ENCODE measurements at regions of chr14 and their contacts with region 1.

Region 1: GRCh38 chr14:103104654-103105452 is 10.3 kb downstream of the EXOC3L4 start:
- DNase-seq: peak; percentile 80
- ATAC-seq: peak; percentile 89
- H3K4me3 ChIP-seq: peak overlapping the region; percentile 16
- H3K27ac ChIP-seq: no peak overlapping the region
- H3K4me1 ChIP-seq: peaks cover 31% of the 10 kb centered on the region
- H3K27me3 ChIP-seq: peaks cover 48% of the 10 kb centered on the region
- CTCF ChIP-seq: peak; percentile 87

Region 2: DNA sequence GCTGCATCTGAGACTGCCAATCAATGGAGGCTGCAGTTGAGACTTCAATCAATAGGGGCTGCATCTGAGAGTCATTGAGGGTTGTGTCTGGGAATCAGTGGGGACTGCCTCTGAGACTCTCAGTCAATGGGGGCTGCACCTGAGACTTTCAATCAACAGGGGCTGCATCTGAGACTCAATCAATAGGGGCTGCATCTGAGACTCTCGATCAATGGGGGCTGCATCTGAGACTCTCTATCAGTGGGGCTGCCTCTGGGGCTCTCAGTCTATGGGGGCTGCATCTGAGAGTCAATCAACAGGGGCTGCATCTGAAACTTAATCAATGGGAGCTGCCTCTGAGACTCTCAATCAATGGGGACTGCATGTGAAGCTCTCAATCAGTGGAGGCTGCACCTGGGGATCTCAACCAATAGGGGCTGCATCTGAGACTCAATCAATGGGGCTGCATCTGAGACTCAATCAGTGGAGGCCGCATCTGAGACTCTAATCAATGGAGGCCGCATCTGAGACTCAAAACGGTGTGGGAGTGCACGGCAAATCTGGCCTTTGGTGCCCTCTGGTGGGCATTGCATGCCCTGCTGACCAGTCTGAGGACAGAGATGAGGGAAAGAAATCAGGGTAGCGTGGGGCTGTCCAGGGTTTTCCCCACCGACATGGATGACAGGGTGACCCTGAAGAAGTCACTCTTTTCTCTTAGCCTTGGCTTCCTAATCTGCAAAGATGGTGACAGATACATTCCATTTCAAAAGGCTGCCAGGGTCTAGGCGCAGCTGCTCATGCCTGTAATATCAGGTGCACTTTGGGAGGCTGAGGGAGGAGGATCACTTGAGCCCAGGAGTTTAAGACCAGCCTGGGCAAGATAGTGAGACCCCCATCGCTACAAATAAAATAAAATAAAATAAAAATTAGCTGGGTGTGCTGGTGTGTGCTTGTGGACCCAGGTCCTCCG is 187.8 kb after region 1 on chr14:
- intact Hi-C with region 1: loop called (anchors 10 kb)
- DNase-seq: peak; percentile 79
- ATAC-seq: peak; percentile 88 to 94
- H3K4me3 ChIP-seq: no peak overlapping the region
- H3K27ac ChIP-seq: no peak overlapping the region
- H3K4me1 ChIP-seq: no peaks in the 10 kb centered on the region
- H3K27me3 ChIP-seq: no peaks in the 10 kb centered on the region
- CTCF ChIP-seq: peak; percentile 94

Measured in lower lobe of right lung (tissue), 2 donors.